ENCODE measurements at regions of chr20 and their contacts with region 1.

Region 1: DNA sequence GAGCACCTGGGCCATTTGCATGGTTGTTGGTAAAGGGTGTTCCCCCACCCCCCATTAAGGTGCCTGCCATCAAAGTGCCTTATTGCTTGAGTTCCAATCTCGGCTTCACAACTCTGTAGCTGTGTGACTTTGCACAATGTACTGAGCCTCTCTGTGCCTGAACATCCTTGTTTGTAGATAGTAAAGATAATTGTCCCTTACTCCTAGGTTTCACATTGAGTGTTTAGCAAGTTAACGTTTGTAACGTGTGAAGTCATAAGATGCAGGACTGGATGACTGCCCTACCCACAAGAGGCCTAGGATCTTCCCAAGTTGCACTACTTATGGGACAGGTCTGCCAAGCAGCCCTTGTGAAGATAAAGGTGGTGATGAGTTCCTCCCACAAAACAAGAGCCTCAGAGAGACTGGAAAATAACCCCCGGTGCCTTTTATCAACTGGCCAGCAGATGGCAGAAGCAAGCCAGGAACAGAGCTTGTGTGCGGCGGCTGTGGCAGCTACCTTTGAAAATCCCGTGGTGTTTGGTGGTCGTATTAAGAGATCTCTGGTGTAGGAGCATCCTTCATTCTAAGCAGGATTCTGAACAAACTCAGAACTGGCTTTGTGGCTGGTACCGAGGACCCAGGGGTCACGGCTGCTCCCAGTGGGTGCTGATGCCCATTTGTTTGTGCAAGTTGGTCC is 99.0 kb downstream of the CDH26 start:
- DNase-seq: peak; percentile 82
- ATAC-seq: peak; percentile 75
- H3K4me3 Mint-ChIP-seq: peak overlapping the region; percentile 71
- H3K27ac Mint-ChIP-seq: peak overlapping the region; percentile 91
- H3K4me1 Mint-ChIP-seq: peaks cover 44% of the 10 kb centered on the region
- H3K27me3 Mint-ChIP-seq: no peaks in the 10 kb centered on the region

Region 2: GRCh38 chr20:59903621-59904020 is 153.6 kb before region 1 on chr20:
- CTCF ChIA-PET with region 1: no interaction called
- POLR2A ChIA-PET with region 1: no interaction called
- intact Hi-C with region 1: no loop called
- DNase-seq: no peak
- ATAC-seq: no peak
- H3K4me3 Mint-ChIP-seq: no peak overlapping the region
- H3K27ac Mint-ChIP-seq: no peak overlapping the region
- H3K4me1 Mint-ChIP-seq: no peaks in the 10 kb centered on the region
- H3K27me3 Mint-ChIP-seq: peaks cover 3% of the 10 kb centered on the region

Region 3: GRCh38 chr20:59940174-59940971 is 116.9 kb before region 1 on chr20 and contains the starts of genes FAM217B and PPP1R3D:
- CTCF ChIA-PET with region 1: interaction called, 3 read pairs
- POLR2A ChIA-PET with region 1: no interaction called
- intact Hi-C with region 1: loop called in 1 of 2 experiments (anchors 2 kb)
- DNase-seq: peak; percentile 95
- ATAC-seq: peak; percentile 95
- H3K4me3 Mint-ChIP-seq: peak within 1 kb of the TSS; percentile 90
- H3K27ac Mint-ChIP-seq: peak within 1 kb of the TSS; percentile 95
- H3K4me1 Mint-ChIP-seq: peaks cover 36% of the 10 kb centered on the region
- H3K27me3 Mint-ChIP-seq: no peaks in the 10 kb centered on the region
- total RNA-seq, gene FAM217B: 25.6 to 33.2 TPM
- total RNA-seq, gene PPP1R3D: 4.4 to 4.7 TPM

Region 4: GRCh38 chr20:60137629-60138245 is 80.5 kb after region 1 on chr20:
- CTCF ChIA-PET with region 1: interaction called, 6 read pairs
- POLR2A ChIA-PET with region 1: no interaction called
- intact Hi-C with region 1: loop called (anchors 2 to 10 kb)
- DNase-seq: peak; percentile 63
- ATAC-seq: peak; percentile 86
- H3K4me3 Mint-ChIP-seq: peak overlapping the region; percentile 71
- H3K27ac Mint-ChIP-seq: no peak overlapping the region
- H3K4me1 Mint-ChIP-seq: peaks cover 11% of the 10 kb centered on the region
- H3K27me3 Mint-ChIP-seq: no peaks in the 10 kb centered on the region

Region 5: GRCh38 chr20:60262967-60263603 is 205.8 kb after region 1 on chr20:
- CTCF ChIA-PET with region 1: interaction called, 17 read pairs
- POLR2A ChIA-PET with region 1: no interaction called
- intact Hi-C with region 1: loop called (anchors 1 kb)
- DNase-seq: peak; percentile 70
- ATAC-seq: peak; percentile 36
- H3K4me3 Mint-ChIP-seq: no peak overlapping the region
- H3K27ac Mint-ChIP-seq: no peak overlapping the region
- H3K4me1 Mint-ChIP-seq: peaks cover 16% of the 10 kb centered on the region
- H3K27me3 Mint-ChIP-seq: no peaks in the 10 kb centered on the region

Region 6: DNA sequence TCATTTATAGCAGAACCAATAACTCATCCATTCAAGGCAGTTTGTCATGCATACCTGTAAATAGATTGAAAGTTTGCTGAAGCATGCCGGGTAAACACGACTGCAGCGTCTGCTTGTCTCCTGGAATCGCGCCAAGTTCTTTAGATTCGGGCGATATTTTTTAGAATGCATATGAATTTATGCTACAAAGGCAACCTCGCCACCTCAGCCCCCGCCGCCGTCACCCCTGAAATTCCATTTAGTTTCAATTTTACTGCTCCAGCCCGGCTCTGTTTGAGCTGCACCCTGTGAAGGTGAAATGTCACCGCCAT is 1177.5 kb after region 1 on chr20:
- CTCF ChIA-PET with region 1: interaction called, 4 read pairs
- POLR2A ChIA-PET with region 1: no interaction called
- intact Hi-C with region 1: loop called (anchors 1 to 10 kb)
- DNase-seq: no peak
- ATAC-seq: no peak
- H3K4me3 Mint-ChIP-seq: no peak overlapping the region
- H3K27ac Mint-ChIP-seq: no peak overlapping the region
- H3K4me1 Mint-ChIP-seq: no peaks in the 10 kb centered on the region
- H3K27me3 Mint-ChIP-seq: peaks cover 11% of the 10 kb centered on the region

Measured in activated CD4-positive, alpha-beta T cell treated with anti-CD3 and anti-CD28 coated beads for 36 hours (primary cell).